GM18951 (cell line): ENCODE measurements at regions of chr15 and their contacts with region 1.

Region 1: DNA sequence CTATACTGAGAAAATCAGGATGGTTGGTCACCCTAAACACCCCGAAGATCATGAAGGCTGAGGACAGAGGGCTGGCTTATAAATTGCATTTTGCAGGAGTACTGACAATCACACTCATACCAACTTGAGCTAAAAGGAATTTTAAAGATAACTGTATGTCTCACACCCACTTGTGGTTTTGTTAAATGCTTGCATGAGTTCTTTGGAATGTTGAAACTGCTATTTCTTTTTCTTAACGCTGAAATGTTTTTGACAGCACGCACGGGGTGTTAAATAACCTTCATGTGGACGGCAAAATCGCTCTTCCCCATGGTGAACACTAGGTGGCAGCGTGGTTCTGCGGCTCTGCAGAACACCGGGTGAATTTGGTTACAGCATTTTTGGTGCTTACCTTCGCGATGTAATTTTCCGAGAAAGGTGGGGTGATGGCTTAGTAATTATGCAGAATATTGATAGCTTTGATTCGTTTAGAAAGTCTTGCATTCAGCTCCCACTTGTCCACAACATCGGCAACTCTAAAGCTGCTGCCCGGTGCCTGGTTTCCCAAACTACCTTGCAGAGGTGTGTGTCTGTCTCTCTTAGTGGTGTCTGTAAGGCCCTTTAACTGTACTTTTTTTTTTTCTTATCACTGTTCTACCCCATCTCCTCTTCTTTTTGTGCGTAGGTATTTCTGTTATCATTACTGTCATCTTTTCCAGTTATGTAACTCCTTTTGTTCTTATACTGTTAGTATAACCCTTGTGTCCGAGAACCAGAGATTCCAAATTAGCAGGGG is 51.7 kb downstream of the ARNT2 start:
- POLR2A ChIP-seq: no peak

Region 2: DNA sequence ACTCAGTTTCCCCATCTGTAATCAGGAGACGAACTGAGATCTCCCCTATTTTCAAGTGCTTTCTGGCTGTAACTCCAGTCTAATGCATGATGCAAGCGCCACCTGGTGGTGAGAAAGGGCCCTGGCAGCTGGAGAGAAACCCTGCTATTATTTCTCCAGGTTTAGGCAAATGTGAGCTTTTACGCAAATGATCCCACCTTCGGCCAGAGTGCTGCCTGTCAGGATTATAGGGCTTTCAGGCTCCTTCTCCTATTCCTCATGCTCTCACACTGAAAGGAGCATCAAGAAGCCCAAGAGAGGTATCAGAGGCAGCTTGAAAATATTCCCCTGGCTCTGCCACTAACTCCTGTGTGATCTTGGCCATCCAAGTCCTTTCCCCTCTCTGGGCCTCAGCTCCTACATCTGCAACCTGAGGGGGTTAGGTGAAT is 1271.4 kb before region 1 on chr15:
- in situ Hi-C with region 1: no loop called
- POLR2A ChIP-seq: no peak

Region 3: GRCh38 chr15:80776420-80777045 is 320.7 kb after region 1 on chr15:
- in situ Hi-C with region 1: loop called (anchors 10 kb)
- POLR2A ChIP-seq: no peak

Region 4: GRCh38 chr15:80953936-80954778 is 498.3 kb after region 1 on chr15:
- in situ Hi-C with region 1: no loop called
- POLR2A ChIP-seq: no peak

Region 5: DNA sequence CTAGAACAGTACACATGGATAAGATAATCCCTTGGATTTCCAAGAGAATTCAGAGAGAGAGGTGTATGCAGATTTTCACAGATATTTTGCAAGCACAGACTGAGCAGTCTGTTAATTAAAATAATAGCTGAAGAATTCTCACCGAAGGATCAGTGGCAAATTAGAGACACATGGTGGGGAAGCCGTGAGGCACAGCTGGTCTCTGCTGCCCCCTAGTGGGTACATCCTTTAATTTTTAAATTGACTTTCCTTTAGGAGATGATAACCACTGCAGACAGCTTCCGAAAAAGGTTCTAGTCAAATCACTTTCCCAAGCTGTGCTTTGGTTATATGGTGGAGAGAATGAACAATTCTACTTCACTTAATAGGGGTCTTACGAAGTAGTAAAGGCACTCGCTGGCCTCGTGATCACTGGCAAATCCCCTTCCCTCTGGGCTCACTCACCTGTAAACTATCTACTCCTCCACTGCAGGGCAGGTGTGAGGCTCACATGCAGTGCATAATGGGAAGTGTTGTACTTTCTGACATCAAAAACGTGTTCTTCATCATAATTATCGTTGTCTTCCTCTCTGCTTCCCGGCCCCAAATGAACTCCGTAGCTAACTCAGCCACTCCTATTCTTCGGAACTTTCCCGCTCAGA is 514.3 kb after region 1 on chr15:
- in situ Hi-C with region 1: loop called (anchors 10 kb)
- POLR2A ChIP-seq: no peak

Region 6: GRCh38 chr15:81265944-81266775 is 810.3 kb after region 1 on chr15:
- in situ Hi-C with region 1: loop called (anchors 25 kb)
- POLR2A ChIP-seq: no peak